Activated CD4-positive, alpha-beta T cell treated with anti-CD3 and anti-CD28 coated beads for 36 hours (primary cell): ENCODE measurements at regions of chrX and their contacts with region 1.

Region 1: DNA sequence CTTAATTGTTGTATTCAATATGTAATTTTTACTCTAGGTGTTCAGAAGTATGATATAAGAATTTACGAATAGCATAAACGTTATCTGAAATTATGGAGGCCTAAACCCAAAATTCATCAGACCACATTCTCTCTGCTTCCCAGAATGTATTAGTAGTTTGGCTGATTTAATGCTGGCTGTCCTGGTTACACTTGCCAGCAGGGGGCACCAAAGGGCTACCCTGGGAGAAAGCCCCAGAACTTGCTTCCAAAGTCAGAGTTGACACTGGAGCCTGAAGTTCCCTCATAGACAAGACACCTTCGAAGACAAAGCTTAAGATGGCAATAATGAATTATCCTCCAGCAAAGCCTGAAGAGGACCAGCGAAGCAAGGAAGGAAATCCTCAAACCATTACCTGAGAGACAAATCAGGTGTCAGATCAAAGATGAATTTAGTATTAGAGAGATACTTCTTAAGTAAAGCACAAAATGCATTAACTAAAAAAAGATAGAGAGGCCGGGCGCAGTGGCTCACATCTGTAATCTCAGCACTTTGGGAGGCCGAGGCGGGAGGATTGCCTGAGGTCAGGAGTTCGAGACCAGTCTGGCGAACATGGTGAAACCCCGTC is 11.3 kb upstream of the ANOS1 start:
- DNase-seq: peak; percentile 69
- ATAC-seq: no peak
- H3K4me3 Mint-ChIP-seq: no peak overlapping the region
- H3K27ac Mint-ChIP-seq: no peak overlapping the region
- H3K4me1 Mint-ChIP-seq: no peaks in the 10 kb centered on the region
- H3K27me3 Mint-ChIP-seq: peaks cover 3% of the 10 kb centered on the region

Region 2: GRCh38 chrX:7996414-7996813 is 746.8 kb before region 1 on chrX:
- CTCF ChIA-PET with region 1: interaction called, 7 read pairs
- POLR2A ChIA-PET with region 1: no interaction called
- intact Hi-C with region 1: loop called (anchors 1 to 2 kb)
- DNase-seq: peak; percentile 28
- ATAC-seq: no peak
- H3K4me3 Mint-ChIP-seq: no peak overlapping the region
- H3K27ac Mint-ChIP-seq: no peak overlapping the region
- H3K4me1 Mint-ChIP-seq: no peaks in the 10 kb centered on the region
- H3K27me3 Mint-ChIP-seq: no peaks in the 10 kb centered on the region

Region 3: GRCh38 chrX:8297766-8298165 is 445.5 kb before region 1 on chrX:
- CTCF ChIA-PET with region 1: no interaction called
- POLR2A ChIA-PET with region 1: no interaction called
- intact Hi-C with region 1: no loop called
- DNase-seq: no peak
- ATAC-seq: no peak
- H3K4me3 Mint-ChIP-seq: no peak overlapping the region
- H3K27ac Mint-ChIP-seq: no peak overlapping the region
- H3K4me1 Mint-ChIP-seq: no peaks in the 10 kb centered on the region
- H3K27me3 Mint-ChIP-seq: no peaks in the 10 kb centered on the region

Region 4: DNA sequence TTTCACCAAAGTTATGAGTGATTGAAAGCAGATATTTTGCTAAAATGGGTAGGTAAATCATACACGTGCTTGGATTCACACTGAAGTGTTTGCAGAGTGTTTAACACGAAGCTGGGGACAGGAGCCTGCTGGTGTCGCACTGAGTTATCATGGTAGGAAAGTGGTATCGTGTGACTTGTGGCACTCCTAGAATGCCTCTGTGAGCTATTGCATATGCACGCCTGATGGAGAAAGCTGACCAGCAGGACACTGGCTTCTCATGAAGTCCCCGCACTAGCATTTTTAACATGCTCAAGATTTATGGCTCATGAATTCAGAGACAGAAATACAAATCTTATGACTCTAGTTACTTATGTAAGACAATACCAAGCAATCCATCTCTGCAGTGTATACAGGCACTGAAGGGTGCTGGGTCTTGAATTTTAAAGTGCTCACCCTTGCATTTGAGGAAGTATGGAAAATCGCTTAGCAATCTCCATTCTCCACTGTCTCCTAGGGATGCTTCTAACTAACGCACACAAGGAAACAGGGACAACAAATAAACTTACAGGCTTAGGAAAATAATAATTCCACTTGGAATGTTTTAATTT is 258.8 kb before region 1 on chrX:
- CTCF ChIA-PET with region 1: no interaction called
- POLR2A ChIA-PET with region 1: no interaction called
- intact Hi-C with region 1: no loop called
- DNase-seq: no peak
- ATAC-seq: no peak
- H3K4me3 Mint-ChIP-seq: no peak overlapping the region
- H3K27ac Mint-ChIP-seq: no peak overlapping the region
- H3K4me1 Mint-ChIP-seq: no peaks in the 10 kb centered on the region
- H3K27me3 Mint-ChIP-seq: no peaks in the 10 kb centered on the region